ENCODE measurements at regions of chr11 and their contacts with region 1.

Region 1: DNA sequence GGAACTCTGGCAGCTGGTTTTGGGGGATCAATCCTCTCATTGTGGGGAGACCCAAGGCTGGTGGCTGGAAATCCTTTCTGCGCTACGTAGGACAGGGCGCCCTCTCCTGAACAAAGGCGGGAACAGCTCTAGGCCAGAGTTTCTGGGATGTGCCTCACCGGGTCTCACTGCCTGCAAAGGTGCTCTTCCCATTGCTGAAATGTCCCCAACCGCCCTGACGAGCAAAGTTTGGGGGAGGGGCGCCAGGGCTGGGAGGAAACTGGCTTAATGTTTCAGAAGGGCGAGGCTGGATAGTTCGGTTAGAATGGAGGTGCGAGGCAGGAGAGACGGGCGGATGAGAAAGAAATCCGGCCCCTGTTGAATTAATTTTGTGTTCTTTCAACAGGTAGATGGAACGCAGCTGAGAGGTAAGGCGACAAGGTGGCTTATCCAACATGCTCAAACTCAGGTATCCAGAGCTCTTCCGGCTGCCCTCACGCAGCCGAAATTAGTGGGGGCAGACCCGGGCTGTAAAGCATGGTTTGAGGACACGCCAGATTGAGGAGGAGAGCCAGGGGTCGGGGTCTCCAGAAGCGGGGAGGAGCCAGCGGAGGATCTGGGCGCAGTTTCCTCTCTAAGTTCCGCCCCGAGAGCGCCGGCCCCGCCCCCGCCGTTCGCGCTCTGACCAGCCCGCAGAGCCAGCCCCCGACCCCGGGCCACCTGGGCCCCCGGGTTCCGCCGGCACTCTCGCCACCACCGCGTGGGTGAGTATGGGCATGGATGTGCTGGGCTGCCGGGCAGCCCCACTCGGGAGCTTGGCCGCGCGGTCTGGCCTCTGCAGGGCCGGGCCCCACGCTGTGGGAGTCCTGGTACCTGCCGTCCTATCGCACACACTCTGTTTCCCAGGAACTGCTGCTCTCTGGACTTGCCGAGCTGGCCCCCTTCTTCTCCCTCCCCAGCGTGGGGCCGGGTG is at the start of gene PGAP2:
- DNase-seq: peak; percentile 54 to 90
- H3K4me3 ChIP-seq: peak within 1 kb of the TSS; percentile 66 to 84 (median 74)
- H3K27ac ChIP-seq: peak within 1 kb of the TSS; percentile 46; the same call in 1 of the 2 replicates
- H3K4me1 ChIP-seq: peaks cover 0 to 8% (median 5%) of the 10 kb centered on the region in 4 experiments; a peak in 5 of 7 replicates
- H3K27me3 ChIP-seq: no peaks in the 10 kb centered on the region
- CTCF ChIP-seq: peak; percentile 75 to 89 (median 86)
- EP300 ChIP-seq: no peak
- POLR2A ChIP-seq: peak in 1 of 2 experiments; percentile 61; a peak in 2 of 3 replicates
- RAD21 ChIP-seq: peak; percentile 73 to 76
- total RNA-seq, gene PGAP2: 56.0 and 56.5 TPM in 2 replicates

Region 2: DNA sequence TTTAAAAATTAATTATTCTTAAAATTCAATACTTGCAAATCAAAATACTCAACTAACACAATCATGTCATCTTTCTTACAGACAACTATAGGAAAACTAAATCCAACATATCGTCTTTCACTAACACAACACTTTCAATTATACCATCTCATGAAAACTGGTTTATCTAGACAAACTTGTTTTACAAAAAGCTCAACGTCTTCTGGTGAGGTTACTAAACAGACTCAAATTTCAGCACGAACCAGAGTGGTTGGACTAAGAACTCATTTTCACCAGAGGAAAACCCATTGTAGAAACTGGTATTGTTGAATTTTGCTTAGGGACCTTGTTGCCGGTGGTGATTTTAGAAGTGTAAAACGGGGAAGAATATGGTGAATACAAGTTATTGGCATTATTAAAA is 63.0 kb before region 1 on chr11:
- CTCF ChIA-PET with region 1: interaction called, 10 read pairs
- POLR2A ChIA-PET with region 1: interaction called, 3 read pairs
- DNase-seq: no peak
- H3K4me3 ChIP-seq: no peak overlapping the region
- H3K27ac ChIP-seq: no peak overlapping the region
- H3K4me1 ChIP-seq: no peaks in the 10 kb centered on the region
- H3K27me3 ChIP-seq: no peaks in the 10 kb centered on the region
- CTCF ChIP-seq: no peak
- EP300 ChIP-seq: no peak
- POLR2A ChIP-seq: no peak
- RAD21 ChIP-seq: no peak

Region 3: GRCh38 chr11:3786781-3787428 is 21.3 kb before region 1 on chr11:
- CTCF ChIA-PET with region 1: interaction called, 24 read pairs
- POLR2A ChIA-PET with region 1: no interaction called
- DNase-seq: no peak
- H3K4me3 ChIP-seq: no peak overlapping the region
- H3K27ac ChIP-seq: no peak overlapping the region
- H3K4me1 ChIP-seq: no peaks in the 10 kb centered on the region
- H3K27me3 ChIP-seq: no peaks in the 10 kb centered on the region
- CTCF ChIP-seq: no peak
- EP300 ChIP-seq: no peak
- POLR2A ChIP-seq: no peak
- RAD21 ChIP-seq: no peak

Region 4: DNA sequence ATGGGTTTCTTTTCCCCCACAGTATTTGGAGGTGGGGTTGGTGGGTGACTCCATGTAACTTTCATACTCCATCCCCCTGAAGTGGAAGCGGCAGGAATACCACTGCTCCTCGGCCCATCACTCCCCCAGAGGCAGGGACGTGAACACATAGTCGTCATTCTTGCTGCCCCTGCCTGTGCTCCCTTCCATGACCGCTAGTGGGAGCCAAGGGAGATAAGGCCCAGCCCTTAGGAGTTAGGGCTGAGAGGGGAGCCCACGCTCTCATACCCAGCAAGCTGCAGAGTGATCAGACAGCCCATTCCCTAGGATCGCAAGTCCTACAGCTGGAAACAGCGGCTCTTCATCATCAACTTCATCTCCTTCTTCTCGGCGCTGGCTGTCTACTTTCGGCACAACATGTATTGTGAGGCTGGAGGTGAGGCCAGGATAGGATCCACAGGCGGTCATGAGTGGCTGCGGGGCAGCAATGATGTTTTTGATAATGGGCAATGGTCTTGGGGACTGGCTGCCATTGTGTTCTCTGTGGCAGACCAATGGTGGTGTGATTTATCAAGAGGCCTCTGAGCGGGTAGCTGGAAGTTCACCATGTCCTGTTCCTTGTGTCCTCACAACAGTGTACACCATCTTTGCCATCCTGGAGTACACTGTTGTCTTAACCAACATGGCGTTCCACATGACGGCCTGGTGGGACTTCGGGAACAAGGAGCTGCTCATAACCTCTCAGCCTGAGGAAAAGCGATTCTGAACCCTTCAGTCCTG is 16.7 kb after region 1 on chr11:
- CTCF ChIA-PET with region 1: interaction called, 61 read pairs
- POLR2A ChIA-PET with region 1: interaction called, 32 read pairs
- DNase-seq: peak; percentile 75 to 96
- H3K4me3 ChIP-seq: no peak overlapping the region
- H3K27ac ChIP-seq: peak overlapping the region; percentile 22; the same call in 1 of the 2 replicates
- H3K4me1 ChIP-seq: peaks cover 22 to 32% (median 24%) of the 10 kb centered on the region in 4 experiments
- H3K27me3 ChIP-seq: no peaks in the 10 kb centered on the region
- CTCF ChIP-seq: peak; percentile 99 to 100 (median 100)
- EP300 ChIP-seq: no peak
- POLR2A ChIP-seq: peak; percentile 48 to 60
- RAD21 ChIP-seq: peak; percentile 77 to 80

Region 5: DNA sequence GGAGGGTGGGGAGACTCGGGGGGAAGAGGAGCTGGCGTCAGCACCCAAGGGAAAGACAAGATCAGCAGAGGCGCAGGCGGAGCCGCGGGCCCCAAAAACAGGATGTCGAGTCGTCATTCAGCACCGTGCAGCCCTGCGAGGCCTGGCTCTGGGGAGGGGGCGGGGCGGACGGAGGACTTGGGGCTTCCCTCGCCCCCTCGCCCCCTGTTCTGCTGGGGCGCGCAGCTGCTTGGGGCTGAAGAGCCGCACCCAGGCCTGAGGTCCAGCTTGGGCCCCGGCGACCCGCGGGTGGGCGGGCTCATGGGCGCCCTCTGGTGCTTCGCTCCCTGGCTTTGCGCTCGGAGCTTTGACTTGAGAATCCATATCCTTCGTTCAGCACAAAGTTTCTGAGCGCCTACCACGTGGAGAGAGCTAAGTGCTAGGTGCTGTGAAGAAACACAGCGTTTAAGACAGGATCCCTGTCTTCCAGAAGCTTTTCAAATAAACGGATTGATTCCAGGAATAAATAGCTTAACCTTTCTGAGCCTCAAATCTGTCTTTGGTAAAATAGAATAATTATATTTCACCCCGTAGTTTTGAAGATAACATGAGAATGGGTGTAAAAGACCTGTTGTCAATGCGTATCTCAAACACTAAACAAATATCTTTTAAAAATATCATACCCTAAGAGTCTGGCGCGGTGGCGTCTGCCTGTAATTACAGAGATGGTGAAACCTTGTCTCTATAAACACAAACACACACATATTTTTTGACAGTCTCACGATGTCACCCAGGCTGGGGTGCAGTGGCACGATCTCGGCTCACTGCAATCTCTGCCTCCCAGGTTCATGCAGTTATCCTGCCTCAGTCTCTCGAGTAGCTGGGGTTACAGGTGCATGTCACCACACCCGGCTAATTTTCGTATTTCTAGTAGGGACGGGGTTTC is 33.5 kb after region 1 on chr11:
- CTCF ChIA-PET with region 1: interaction called, 15 read pairs
- POLR2A ChIA-PET with region 1: no interaction called
- DNase-seq: peak in 1 of 2 experiments; percentile 59
- H3K4me3 ChIP-seq: peak overlapping the region; percentile 36 to 97 (median 59)
- H3K27ac ChIP-seq: no peak overlapping the region
- H3K4me1 ChIP-seq: peaks cover 5 to 14% (median 8%) of the 10 kb centered on the region in 4 experiments; a peak in 4 of 7 replicates
- H3K27me3 ChIP-seq: peaks cover 0 to 3% (median 0%) of the 10 kb centered on the region in 4 experiments; a peak in 1 of 7 replicates
- CTCF ChIP-seq: peak; percentile 66 to 83 (median 72)
- EP300 ChIP-seq: 0 out of 3 replicates have a peak, but pooled peaks of 1 of the 2 experiments have one; percentile 6
- POLR2A ChIP-seq: no peak
- RAD21 ChIP-seq: peak; percentile 40 to 68; a peak in 3 of 4 replicates